ENCODE measurements at regions of chr11 and their contacts with region 1.

Region 1: DNA sequence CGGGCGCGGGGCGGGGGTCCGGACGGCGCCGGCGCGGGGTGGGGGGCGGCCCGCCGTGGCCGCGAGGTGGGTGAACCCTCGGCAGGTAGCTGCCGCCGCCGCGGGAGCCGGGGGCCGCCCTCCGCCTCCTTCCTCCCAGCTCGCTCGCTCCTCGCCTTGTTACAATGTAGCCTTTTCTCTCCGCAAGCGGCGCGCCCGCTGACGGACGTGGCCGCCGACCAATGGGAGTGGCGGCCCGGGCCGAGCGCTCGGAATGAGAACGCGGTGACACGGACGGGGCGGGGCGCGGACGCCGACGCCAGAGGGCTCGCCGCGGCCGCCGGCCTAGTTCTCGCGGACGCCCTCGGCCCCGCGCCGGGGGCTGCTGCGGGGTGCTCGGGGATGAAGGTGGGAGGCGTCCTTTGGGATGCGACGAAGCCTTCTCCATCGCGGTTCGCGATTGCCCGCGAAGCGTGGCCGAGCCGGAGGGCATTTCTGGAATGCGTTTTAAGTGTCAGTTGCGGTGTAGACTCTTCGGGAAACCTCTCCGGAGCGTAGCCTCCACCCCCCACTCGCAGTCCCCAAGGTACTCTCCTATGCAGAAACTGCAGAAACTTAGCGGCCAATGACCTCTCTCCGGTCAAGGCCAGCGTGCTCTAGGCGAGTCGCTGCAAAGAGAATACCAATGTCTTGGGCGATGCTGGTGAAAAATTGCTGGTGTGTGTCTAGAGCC is 734 bp downstream of the PRDM11 start:
- DNase-seq: peak; percentile 92
- ATAC-seq: peak; percentile 98
- H3K4me3 Mint-ChIP-seq: peak overlapping the region; percentile 87
- H3K27ac Mint-ChIP-seq: peak overlapping the region; percentile 77
- H3K4me1 Mint-ChIP-seq: peaks cover 33% of the 10 kb centered on the region
- H3K27me3 Mint-ChIP-seq: peaks cover 7% of the 10 kb centered on the region
- CTCF ChIP-seq: no peak

Region 2: GRCh38 chr11:44950625-44951476 is 196.3 kb before region 1 on chr11 and contains the start of gene TP53I11:
- CTCF ChIA-PET with region 1: no interaction called
- POLR2A ChIA-PET with region 1: no interaction called
- intact Hi-C with region 1: loop called (anchors 2 kb)
- DNase-seq: peak; percentile 74
- ATAC-seq: peak; percentile 76
- H3K4me3 Mint-ChIP-seq: peak within 1 kb of the TSS; percentile 91
- H3K27ac Mint-ChIP-seq: peak within 1 kb of the TSS; percentile 87
- H3K4me1 Mint-ChIP-seq: peaks cover 60% of the 10 kb centered on the region
- H3K27me3 Mint-ChIP-seq: no peaks in the 10 kb centered on the region
- CTCF ChIP-seq: peak; percentile 44
- total RNA-seq, gene TP53I11: 145 and 175 TPM in 2 replicates

Region 3: GRCh38 chr11:45180179-45180842 is 33.1 kb after region 1 on chr11:
- CTCF ChIA-PET with region 1: no interaction called
- POLR2A ChIA-PET with region 1: no interaction called
- intact Hi-C with region 1: loop called (anchors 2 kb)
- DNase-seq: peak; percentile 26
- ATAC-seq: peak; percentile 50
- H3K4me3 Mint-ChIP-seq: peak overlapping the region; percentile 84
- H3K27ac Mint-ChIP-seq: no peak overlapping the region
- H3K4me1 Mint-ChIP-seq: peaks cover 24% of the 10 kb centered on the region
- H3K27me3 Mint-ChIP-seq: peaks cover 8% of the 10 kb centered on the region
- CTCF ChIP-seq: no peak

Region 4: GRCh38 chr11:45354976-45355705 is 208.0 kb after region 1 on chr11:
- CTCF ChIA-PET with region 1: no interaction called
- POLR2A ChIA-PET with region 1: no interaction called
- intact Hi-C with region 1: loop called (anchors 1 kb)
- DNase-seq: peak; percentile 77
- ATAC-seq: peak; percentile 95
- H3K4me3 Mint-ChIP-seq: peak overlapping the region; percentile 83
- H3K27ac Mint-ChIP-seq: peak overlapping the region; percentile 73
- H3K4me1 Mint-ChIP-seq: peaks cover 15% of the 10 kb centered on the region
- H3K27me3 Mint-ChIP-seq: peaks cover 5% of the 10 kb centered on the region
- CTCF ChIP-seq: no peak